ENCODE measurements at regions of chr2 and their contacts with region 1.

Region 1: GRCh38 chr2:74529357-74530238 is at the starts of genes AUP1 and HTRA2:
- DNase-seq: peak; percentile 97
- H3K4me3 Mint-ChIP-seq: peak within 1 kb of the TSS; percentile 96
- H3K27ac Mint-ChIP-seq: peak within 1 kb of the TSS; percentile 96
- H3K4me1 Mint-ChIP-seq: peaks cover 35% of the 10 kb centered on the region
- H3K27me3 Mint-ChIP-seq: no peaks in the 10 kb centered on the region
- total RNA-seq, gene AUP1: 170 and 173 TPM in 2 replicates
- total RNA-seq, gene HTRA2: 49.6 and 56.4 TPM in 2 replicates

Region 2: DNA sequence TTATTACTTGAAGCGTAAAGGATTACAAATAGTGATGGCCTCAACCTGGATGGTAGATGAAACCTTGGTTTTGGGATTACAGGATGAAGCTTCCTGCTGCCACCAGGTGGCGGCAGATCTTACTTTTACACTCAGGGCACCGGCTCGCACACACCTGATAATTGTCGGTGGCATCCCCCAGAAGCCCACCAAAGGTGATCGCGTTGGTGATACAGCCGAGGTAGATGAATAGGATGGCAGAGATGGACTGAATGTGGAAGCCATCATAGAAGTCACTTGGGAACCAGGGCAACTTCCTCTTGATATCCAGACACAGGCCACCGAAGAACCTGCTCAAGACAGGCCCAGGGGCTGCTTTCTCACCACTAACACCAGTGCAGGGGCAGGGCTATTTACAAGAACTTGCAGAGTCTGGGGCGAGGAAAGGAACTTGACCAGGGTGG is 279.4 kb before region 1 on chr2:
- intact Hi-C with region 1: loop called (anchors 2 kb)
- DNase-seq: peak; percentile 85
- H3K4me3 Mint-ChIP-seq: no peak overlapping the region
- H3K27ac Mint-ChIP-seq: no peak overlapping the region
- H3K4me1 Mint-ChIP-seq: peaks cover 5% of the 10 kb centered on the region
- H3K27me3 Mint-ChIP-seq: no peaks in the 10 kb centered on the region

Region 3: GRCh38 chr2:74472086-74472944 is 57.3 kb before region 1 on chr2 and contains the start of gene MRPL53:
- intact Hi-C with region 1: loop called (anchors 1 kb)
- DNase-seq: peak; percentile 99
- H3K4me3 Mint-ChIP-seq: peak within 1 kb of the TSS; percentile 99
- H3K27ac Mint-ChIP-seq: peak within 1 kb of the TSS; percentile 98
- H3K4me1 Mint-ChIP-seq: peaks cover 22% of the 10 kb centered on the region
- H3K27me3 Mint-ChIP-seq: no peaks in the 10 kb centered on the region
- total RNA-seq, gene MRPL53: 89.0 and 115 TPM in 2 replicates

Region 4: GRCh38 chr2:74502720-74503505 is 26.7 kb before region 1 on chr2:
- intact Hi-C with region 1: loop called (anchors 1 kb)
- DNase-seq: peak; percentile 85
- H3K4me3 Mint-ChIP-seq: peak overlapping the region; percentile 77
- H3K27ac Mint-ChIP-seq: peak overlapping the region; percentile 58
- H3K4me1 Mint-ChIP-seq: peaks cover 59% of the 10 kb centered on the region
- H3K27me3 Mint-ChIP-seq: peaks cover 46% of the 10 kb centered on the region

Region 5: GRCh38 chr2:74553892-74554645 is 24.5 kb after region 1 on chr2 and contains the start of gene LOXL3:
- intact Hi-C with region 1: loop called (anchors 1 kb)
- DNase-seq: peak; percentile 94
- H3K4me3 Mint-ChIP-seq: peak within 1 kb of the TSS; percentile 96
- H3K27ac Mint-ChIP-seq: peak within 1 kb of the TSS; percentile 95
- H3K4me1 Mint-ChIP-seq: peaks cover 38% of the 10 kb centered on the region
- H3K27me3 Mint-ChIP-seq: peaks cover 9% of the 10 kb centered on the region
- total RNA-seq, gene LOXL3: 1.5 and 1.7 TPM in 2 replicates

Region 6: GRCh38 chr2:74958274-74959105 is 428.9 kb after region 1 on chr2 and contains the start of gene POLE4:
- intact Hi-C with region 1: loop called (anchors 1 kb)
- DNase-seq: peak; percentile 98
- H3K4me3 Mint-ChIP-seq: peak within 1 kb of the TSS; percentile 82
- H3K27ac Mint-ChIP-seq: peak within 1 kb of the TSS; percentile 86
- H3K4me1 Mint-ChIP-seq: peaks cover 47% of the 10 kb centered on the region
- H3K27me3 Mint-ChIP-seq: no peaks in the 10 kb centered on the region
- total RNA-seq, gene POLE4: 53.1 and 58.3 TPM in 2 replicates

Measured in activated CD4-positive, alpha-beta T cell treated with anti-CD3 and anti-CD28 coated beads, Interleukin-2, amount 10 ng/mL, durations not matched to agents 24 days and 14 days (primary cell).